Lower leg skin (tissue), 4 donors: ENCODE measurements at regions of chr1 and their contacts with region 1.

Region 1: GRCh38 chr1:104702731-104703130 is 953.0 kb downstream of the AMY1C start:
- DNase-seq: no peak
- H3K4me3 ChIP-seq: no peak overlapping the region
- CTCF ChIP-seq: no peak
- POLR2A ChIP-seq: no peak

Region 2: DNA sequence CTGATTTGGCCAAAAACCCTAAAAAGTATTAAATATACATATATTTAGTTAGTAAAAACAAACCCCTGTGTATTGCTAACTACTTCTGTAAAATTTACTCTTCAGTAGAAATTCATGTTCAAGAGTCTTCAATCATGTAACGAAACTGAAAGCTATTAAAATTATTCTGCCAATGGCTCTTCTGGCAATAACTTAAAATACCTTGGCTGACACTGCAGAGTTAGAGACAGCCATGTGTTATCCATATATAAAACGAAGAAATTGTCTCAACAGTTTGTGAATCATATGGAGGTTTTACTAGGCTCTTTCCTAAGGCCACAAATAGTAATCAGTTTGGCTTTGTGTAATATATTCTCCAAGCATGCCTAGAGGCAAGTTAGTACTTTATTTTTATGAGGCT is 1951.6 kb before region 1 on chr1:
- intact Hi-C with region 1: no loop called
- DNase-seq: no peak
- H3K4me3 ChIP-seq: no peak overlapping the region
- CTCF ChIP-seq: no peak
- POLR2A ChIP-seq: no peak

Region 3: GRCh38 chr1:104746994-104747393 is 44.3 kb after region 1 on chr1:
- intact Hi-C with region 1: no loop called
- DNase-seq: no peak
- H3K4me3 ChIP-seq: no peak overlapping the region
- CTCF ChIP-seq: no peak
- POLR2A ChIP-seq: no peak

Region 4: GRCh38 chr1:105294838-105295237 is 592.1 kb after region 1 on chr1:
- intact Hi-C with region 1: loop called (anchors 5 kb)
- DNase-seq: no peak
- H3K4me3 ChIP-seq: no peak overlapping the region
- CTCF ChIP-seq: no peak
- POLR2A ChIP-seq: no peak